ENCODE measurements at regions of chr13 and their contacts with region 1.

Region 1: GRCh38 chr13:102596147-102597028 is at the start of gene TPP2:
- DNase-seq: peak; percentile 95
- ATAC-seq: peak; percentile 84
- H3K4me3 ChIP-seq: peak within 1 kb of the TSS; percentile 94
- H3K27ac ChIP-seq: peak within 1 kb of the TSS; percentile 82
- H3K4me1 ChIP-seq: peaks cover 19% of the 10 kb centered on the region; the same call in 1 of the 2 replicates
- H3K27me3 ChIP-seq: no peaks in the 10 kb centered on the region
- CTCF ChIP-seq: no peak
- total RNA-seq, gene TPP2: 16.1 and 30.4 TPM in 2 replicates

Region 2: GRCh38 chr13:101829484-101829883 is 766.9 kb before region 1 on chr13:
- CTCF ChIA-PET with region 1: no interaction called
- POLR2A ChIA-PET with region 1: no interaction called
- intact Hi-C with region 1: no loop called
- DNase-seq: no peak
- ATAC-seq: no peak
- H3K4me3 ChIP-seq: no peak overlapping the region
- H3K27ac ChIP-seq: no peak overlapping the region
- H3K4me1 ChIP-seq: no peaks in the 10 kb centered on the region
- H3K27me3 ChIP-seq: peaks cover 71% of the 10 kb centered on the region
- CTCF ChIP-seq: no peak

Region 3: DNA sequence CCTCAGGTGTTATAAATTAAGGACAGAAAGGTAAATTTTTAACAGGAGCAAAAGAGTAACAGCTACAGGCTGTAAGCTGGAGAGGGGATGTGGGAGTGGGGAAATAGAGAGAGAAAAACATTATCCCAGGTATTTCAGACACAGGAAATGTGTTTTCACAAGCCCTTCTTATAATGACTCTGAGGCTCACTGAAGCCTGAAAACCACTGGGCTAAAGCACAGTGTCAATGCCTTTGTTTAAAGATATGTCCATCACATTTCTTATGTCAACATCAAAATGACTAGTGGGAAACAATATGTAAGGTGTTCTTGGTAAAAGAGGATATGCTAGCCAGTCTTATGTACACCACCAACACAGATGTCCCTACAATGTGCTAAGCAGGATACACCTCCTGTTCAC is 560.4 kb before region 1 on chr13:
- CTCF ChIA-PET with region 1: no interaction called
- POLR2A ChIA-PET with region 1: no interaction called
- intact Hi-C with region 1: no loop called
- DNase-seq: no peak
- ATAC-seq: no peak
- H3K4me3 ChIP-seq: no peak overlapping the region
- H3K27ac ChIP-seq: no peak overlapping the region
- H3K4me1 ChIP-seq: no peaks in the 10 kb centered on the region
- H3K27me3 ChIP-seq: peaks cover 17% of the 10 kb centered on the region
- CTCF ChIP-seq: no peak

Region 4: GRCh38 chr13:102484329-102484728 is 112.1 kb before region 1 on chr13:
- CTCF ChIA-PET with region 1: no interaction called
- POLR2A ChIA-PET with region 1: no interaction called
- intact Hi-C with region 1: no loop called
- DNase-seq: no peak
- ATAC-seq: no peak
- H3K4me3 ChIP-seq: no peak overlapping the region
- H3K27ac ChIP-seq: no peak overlapping the region
- H3K4me1 ChIP-seq: no peaks in the 10 kb centered on the region
- H3K27me3 ChIP-seq: peaks cover 5% of the 10 kb centered on the region
- CTCF ChIP-seq: 0 out of 2 replicates have a peak, but pooled peaks have one; percentile 23

Region 5: DNA sequence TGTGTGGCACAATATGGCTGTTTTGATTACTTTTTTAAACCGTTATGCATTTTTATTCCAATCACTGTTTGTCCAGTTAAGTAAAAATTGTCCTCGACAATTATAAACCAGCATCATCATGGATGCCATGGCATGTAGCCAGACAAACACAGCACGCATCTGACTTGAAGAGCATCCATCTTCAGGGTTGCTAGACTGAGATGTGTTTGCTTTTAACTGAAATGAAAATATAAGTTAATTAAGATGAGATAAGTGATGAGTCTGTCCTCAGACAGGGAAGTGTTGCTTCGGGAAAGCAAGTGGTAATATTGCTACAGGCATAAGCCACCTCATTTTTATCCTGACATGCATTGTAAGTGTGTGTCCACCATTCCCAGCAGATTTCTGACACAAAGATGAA is 92.4 kb before region 1 on chr13:
- CTCF ChIA-PET with region 1: no interaction called
- POLR2A ChIA-PET with region 1: no interaction called
- intact Hi-C with region 1: no loop called
- DNase-seq: no peak
- ATAC-seq: no peak
- H3K4me3 ChIP-seq: no peak overlapping the region
- H3K27ac ChIP-seq: no peak overlapping the region
- H3K4me1 ChIP-seq: no peaks in the 10 kb centered on the region
- H3K27me3 ChIP-seq: peaks cover 7% of the 10 kb centered on the region
- CTCF ChIP-seq: no peak

Region 6: GRCh38 chr13:102651892-102652291 is 55.5 kb after region 1 on chr13:
- CTCF ChIA-PET with region 1: no interaction called
- POLR2A ChIA-PET with region 1: no interaction called
- intact Hi-C with region 1: loop called (anchors 5 kb)
- DNase-seq: no peak
- ATAC-seq: no peak
- H3K4me3 ChIP-seq: no peak overlapping the region
- H3K27ac ChIP-seq: no peak overlapping the region
- H3K4me1 ChIP-seq: peaks cover 8% of the 10 kb centered on the region; the same call in 1 of the 2 replicates
- H3K27me3 ChIP-seq: no peaks in the 10 kb centered on the region
- CTCF ChIP-seq: no peak

Region 7: DNA sequence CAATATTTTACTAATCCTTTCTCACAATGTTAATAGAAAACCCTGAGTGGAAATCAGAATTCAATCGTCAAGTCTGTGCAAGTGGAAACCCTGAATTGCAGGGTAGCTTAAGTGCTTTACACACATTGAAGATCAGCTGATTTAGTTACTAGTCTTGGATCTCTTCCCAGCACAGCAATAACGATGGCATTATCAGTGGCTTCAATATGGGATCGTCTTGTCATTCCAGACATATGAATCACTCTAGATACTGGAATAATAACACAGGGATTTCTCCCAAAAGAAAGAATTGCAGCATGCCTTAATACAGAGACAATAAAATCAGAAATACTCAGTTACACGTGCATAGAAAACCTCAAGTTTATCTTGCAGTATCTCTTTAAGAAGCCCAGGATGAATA is 111.1 kb after region 1 on chr13:
- CTCF ChIA-PET with region 1: no interaction called
- POLR2A ChIA-PET with region 1: no interaction called
- intact Hi-C with region 1: loop called (anchors 5 kb)
- DNase-seq: peak; percentile 84
- ATAC-seq: peak; percentile 76
- H3K4me3 ChIP-seq: no peak overlapping the region
- H3K27ac ChIP-seq: no peak overlapping the region
- H3K4me1 ChIP-seq: peaks cover 44% of the 10 kb centered on the region
- H3K27me3 ChIP-seq: no peaks in the 10 kb centered on the region
- CTCF ChIP-seq: no peak

Region 8: GRCh38 chr13:102825921-102826706 is 229.7 kb after region 1 on chr13:
- CTCF ChIA-PET with region 1: no interaction called
- POLR2A ChIA-PET with region 1: no interaction called
- intact Hi-C with region 1: loop called (anchors 1 kb)
- DNase-seq: peak; percentile 79
- ATAC-seq: peak; percentile 76
- H3K4me3 ChIP-seq: peak overlapping the region; percentile 44
- H3K27ac ChIP-seq: peak overlapping the region; percentile 84
- H3K4me1 ChIP-seq: peaks cover 25% of the 10 kb centered on the region
- H3K27me3 ChIP-seq: no peaks in the 10 kb centered on the region
- CTCF ChIP-seq: no peak

Measured in PC-3 (cell line).